ENCODE measurements at regions of chr14 and their contacts with region 1.

Region 1: GRCh38 chr14:58353516-58354299 is 42.0 kb upstream of the TOMM20L start:
- DNase-seq: no peak
- ATAC-seq: no peak
- H3K4me3 Mint-ChIP-seq: peak overlapping the region; percentile 32
- H3K27ac Mint-ChIP-seq: peak overlapping the region; percentile 66
- H3K4me1 Mint-ChIP-seq: peaks cover 5% of the 10 kb centered on the region
- H3K27me3 Mint-ChIP-seq: no peaks in the 10 kb centered on the region
- CTCF ChIP-seq: no peak

Region 2: DNA sequence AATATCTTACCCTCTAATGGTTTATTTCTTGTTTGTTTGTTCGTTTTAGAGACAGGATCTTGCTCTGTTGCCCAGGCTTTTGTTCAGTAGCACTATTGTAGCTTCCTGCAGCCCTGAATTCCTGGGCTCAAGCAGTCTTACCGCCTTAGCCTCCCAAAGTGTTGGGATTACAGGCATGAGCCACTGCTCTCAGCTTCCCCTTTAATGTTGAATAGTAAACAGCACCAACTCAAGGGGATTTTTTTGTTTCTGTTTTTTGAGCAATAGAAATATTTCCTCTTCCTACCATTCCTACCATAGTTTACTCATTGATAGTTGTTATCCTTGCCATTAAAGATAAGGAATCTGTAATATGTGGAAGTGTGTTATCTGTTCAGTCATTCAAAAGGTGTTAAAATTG is 44.6 kb before region 1 on chr14:
- CTCF ChIA-PET with region 1: no interaction called
- POLR2A ChIA-PET with region 1: no interaction called
- intact Hi-C with region 1: loop called (anchors 5 kb)
- DNase-seq: no peak
- ATAC-seq: no peak
- H3K4me3 Mint-ChIP-seq: no peak overlapping the region
- H3K27ac Mint-ChIP-seq: peak overlapping the region; percentile 41
- H3K4me1 Mint-ChIP-seq: peaks cover 1% of the 10 kb centered on the region
- H3K27me3 Mint-ChIP-seq: no peaks in the 10 kb centered on the region
- CTCF ChIP-seq: no peak

Region 3: GRCh38 chr14:58368956-58369355 is 15.2 kb after region 1 on chr14:
- CTCF ChIA-PET with region 1: no interaction called
- POLR2A ChIA-PET with region 1: interaction called, 5 read pairs
- intact Hi-C with region 1: loop called (anchors 2 kb)
- DNase-seq: no peak
- ATAC-seq: no peak
- H3K4me3 Mint-ChIP-seq: no peak overlapping the region
- H3K27ac Mint-ChIP-seq: no peak overlapping the region
- H3K4me1 Mint-ChIP-seq: peaks cover 3% of the 10 kb centered on the region
- H3K27me3 Mint-ChIP-seq: no peaks in the 10 kb centered on the region
- CTCF ChIP-seq: no peak

Region 4: DNA sequence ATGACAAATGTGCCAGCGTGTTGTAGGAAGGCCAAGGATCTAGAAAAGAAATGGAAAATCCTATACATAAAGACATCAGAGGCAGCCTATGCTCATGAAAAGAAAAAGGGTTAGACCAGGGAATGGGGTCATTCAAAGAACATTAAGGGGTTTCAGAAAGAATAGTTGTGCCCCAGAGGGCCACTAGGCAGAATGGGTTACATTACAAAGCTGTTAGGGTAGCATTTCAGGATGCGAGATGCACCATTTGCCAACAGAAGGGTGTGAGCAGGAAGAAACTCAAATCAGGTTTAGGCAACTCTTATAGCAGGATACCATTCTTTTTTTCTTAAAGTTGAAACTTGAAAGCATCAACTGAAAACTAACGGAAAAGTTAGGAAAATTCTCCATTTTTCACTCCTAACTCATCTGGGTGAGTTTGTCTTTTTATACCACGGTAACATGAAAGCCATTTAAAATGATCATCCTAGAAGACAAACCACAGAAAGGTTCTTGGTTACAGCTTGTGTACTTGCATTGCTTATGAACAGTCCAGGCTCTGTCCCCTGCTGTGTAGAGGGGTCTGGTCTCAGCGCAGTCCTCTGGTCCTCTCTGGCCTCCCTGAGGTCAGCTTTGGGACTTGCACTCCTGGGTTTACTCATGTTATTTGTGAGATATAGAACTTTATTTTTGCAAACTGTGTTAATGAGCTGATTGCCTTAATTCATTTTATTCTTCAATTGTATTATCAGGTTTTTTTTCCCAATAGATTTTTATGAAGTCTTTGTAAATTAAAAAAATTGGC is 493.2 kb after region 1 on chr14:
- CTCF ChIA-PET with region 1: no interaction called
- POLR2A ChIA-PET with region 1: no interaction called
- intact Hi-C with region 1: no loop called
- DNase-seq: no peak
- ATAC-seq: no peak
- H3K4me3 Mint-ChIP-seq: no peak overlapping the region
- H3K27ac Mint-ChIP-seq: no peak overlapping the region
- H3K4me1 Mint-ChIP-seq: no peaks in the 10 kb centered on the region
- H3K27me3 Mint-ChIP-seq: no peaks in the 10 kb centered on the region
- CTCF ChIP-seq: no peak

Region 5: DNA sequence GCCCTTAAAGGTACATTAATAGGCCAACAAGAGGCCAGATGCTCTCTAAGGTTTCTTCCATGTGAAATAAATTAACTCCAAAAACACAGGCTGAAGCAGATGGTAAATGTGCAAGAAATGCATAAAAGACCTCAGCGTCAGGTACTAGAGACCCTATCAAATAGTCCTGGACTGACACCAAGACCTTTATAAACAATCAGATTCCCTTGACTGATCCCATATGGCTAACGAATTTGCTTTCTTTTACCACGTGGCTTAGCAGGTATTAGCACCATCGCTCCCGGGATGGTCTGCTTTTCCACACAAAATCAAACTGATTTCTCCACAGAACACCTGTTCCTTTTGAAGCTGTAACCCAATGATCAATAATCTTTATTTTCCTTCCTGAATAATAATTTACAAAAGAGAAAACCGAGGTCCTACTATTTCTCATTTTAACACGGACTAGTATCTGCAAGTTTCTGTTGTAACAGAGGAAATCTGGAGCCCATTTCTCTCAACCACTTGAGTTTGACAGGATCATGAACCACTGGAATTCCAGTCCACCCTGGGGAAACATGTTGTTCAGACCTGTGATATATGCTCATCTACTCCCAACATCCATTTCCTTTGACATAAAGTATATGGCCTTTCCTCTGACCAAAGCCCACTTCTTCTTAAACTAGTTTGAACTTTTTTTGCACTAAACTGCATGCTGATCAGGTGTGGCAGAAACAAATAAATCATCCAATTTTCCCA is 786.6 kb after region 1 on chr14:
- CTCF ChIA-PET with region 1: no interaction called
- POLR2A ChIA-PET with region 1: no interaction called
- intact Hi-C with region 1: no loop called
- DNase-seq: no peak
- ATAC-seq: no peak
- H3K4me3 Mint-ChIP-seq: no peak overlapping the region
- H3K27ac Mint-ChIP-seq: no peak overlapping the region
- H3K4me1 Mint-ChIP-seq: no peaks in the 10 kb centered on the region
- H3K27me3 Mint-ChIP-seq: no peaks in the 10 kb centered on the region
- CTCF ChIP-seq: no peak